A673 (cell line): ENCODE measurements at regions of chr1 and their contacts with region 1.

Region 1: DNA sequence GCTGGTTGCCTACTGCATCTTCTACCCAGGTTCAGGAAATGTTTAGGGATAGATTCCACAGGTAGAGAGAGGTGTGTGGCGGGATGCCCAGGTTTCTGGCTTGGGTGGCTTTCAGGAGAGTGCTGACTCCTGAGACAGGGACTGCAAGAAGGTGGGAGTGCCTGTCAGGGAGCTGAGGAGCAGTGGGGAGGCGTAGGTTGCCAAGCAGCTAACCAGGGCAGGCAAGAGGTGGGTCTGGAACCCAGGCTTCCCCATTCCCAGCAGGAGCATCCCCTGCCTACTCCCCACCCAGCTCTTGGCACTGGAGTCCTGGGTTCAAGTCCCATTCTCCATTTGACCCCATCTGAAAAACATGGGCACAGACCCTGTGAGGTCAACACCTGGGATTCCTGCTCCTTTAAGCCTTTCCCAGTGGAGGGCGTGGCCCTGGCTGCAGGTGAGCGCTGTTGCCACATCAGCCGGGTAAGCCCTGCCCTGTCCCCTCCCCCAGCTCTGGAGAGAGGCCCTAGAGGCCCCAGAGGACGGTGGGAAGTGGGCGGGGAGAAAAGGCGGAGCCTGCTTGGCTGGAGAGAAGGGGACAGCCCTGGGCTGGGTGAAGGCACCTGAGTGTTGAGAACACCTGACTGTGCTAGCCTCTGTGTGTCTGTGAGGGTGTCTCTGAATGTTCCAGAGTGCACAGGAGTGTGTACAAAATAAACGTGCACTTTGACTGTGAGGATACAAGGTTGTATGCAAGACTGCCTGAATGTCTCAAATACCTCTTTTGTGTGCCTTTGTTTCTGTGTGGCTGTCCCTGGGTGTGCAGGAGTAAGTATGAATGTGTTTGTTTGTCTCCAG is 14.0 kb upstream of the SYNC start:
- DNase-seq: peak; percentile 58
- H3K4me3 ChIP-seq: no peak overlapping the region
- H3K27ac ChIP-seq: no peak overlapping the region
- H3K4me1 ChIP-seq: peaks cover 6% of the 10 kb centered on the region
- H3K27me3 ChIP-seq: no peaks in the 10 kb centered on the region
- CTCF ChIP-seq: no peak

Region 2: DNA sequence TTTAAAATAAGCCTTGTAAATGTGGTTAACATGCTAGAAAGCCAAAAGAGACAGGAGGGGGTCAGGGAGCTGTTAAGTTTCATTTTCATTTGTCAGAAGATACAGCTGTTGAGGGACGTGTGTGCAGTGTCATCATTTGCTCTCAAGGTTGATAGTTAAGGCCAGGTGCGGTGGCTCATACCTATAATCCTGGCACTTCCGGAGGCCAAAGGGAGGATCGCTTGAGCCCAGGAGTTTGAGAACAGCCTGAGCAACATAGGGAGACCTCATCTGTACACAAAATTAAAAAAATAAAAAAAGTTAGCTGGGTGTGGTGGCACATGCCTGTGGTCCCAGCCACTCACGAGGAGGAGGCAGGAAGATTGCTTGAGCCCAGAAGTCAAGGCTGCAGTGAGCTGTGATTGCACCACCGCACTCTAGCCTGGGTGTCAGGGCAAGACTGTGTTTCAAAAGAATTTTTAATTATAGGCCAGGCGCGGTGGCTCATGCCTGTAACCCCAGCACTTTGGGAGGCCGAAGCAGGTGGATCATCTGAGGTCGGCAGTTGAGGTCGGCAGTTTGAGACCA is 88.9 kb before region 1 on chr1:
- CTCF ChIA-PET with region 1: no interaction called
- POLR2A ChIA-PET with region 1: no interaction called
- intact Hi-C with region 1: no loop called
- DNase-seq: no peak
- H3K4me3 ChIP-seq: no peak overlapping the region
- H3K27ac ChIP-seq: no peak overlapping the region
- H3K4me1 ChIP-seq: no peaks in the 10 kb centered on the region
- H3K27me3 ChIP-seq: no peaks in the 10 kb centered on the region
- CTCF ChIP-seq: no peak

Region 3: GRCh38 chr1:32773018-32773763 is 56.7 kb after region 1 on chr1:
- CTCF ChIA-PET with region 1: interaction called, 21 read pairs
- POLR2A ChIA-PET with region 1: no interaction called
- intact Hi-C with region 1: loop called (anchors 1 kb)
- DNase-seq: peak; percentile 78
- H3K4me3 ChIP-seq: no peak overlapping the region
- H3K27ac ChIP-seq: no peak overlapping the region
- H3K4me1 ChIP-seq: no peaks in the 10 kb centered on the region
- H3K27me3 ChIP-seq: no peaks in the 10 kb centered on the region
- CTCF ChIP-seq: peak; percentile 96

Region 4: DNA sequence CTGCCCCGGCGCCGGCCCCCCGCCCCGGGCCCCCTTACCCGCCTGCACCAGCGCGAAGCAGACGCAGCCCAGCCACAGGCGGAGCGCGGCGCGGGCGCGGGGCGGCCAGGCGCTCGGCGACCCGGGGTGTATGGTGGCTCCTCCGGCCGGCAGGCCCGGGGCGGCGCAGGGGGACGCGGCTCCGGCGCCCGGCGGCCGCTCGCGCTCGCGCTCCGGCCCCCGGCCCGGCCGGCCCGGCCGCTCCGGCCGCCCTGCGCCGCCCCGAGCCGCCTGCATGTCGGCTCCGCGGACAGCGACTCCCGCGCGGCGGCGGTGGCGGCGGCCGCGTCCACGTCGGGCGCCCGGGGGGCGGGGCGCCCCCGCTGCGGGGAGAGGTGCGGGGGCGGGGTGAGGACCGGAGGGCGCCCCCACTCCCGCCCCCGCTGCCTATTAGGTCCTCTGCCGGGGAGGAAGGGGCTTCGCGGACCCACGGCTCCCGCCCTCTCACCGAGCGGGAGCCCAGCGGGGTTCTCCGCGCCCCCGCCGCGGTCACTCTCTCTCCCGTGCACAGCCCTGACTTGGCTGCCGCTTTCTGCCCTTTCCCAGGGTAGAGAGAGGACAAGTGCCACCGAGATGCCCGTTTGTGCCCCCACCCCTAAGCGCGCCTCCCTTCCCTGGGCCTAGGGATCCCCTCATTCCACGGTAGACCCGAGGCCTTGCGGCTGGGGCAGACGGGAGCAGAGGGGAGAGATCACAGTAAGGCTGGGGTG is 154.3 kb after region 1 on chr1 and contains the start of gene FNDC5:
- CTCF ChIA-PET with region 1: interaction called, 5 read pairs
- POLR2A ChIA-PET with region 1: no interaction called
- intact Hi-C with region 1: loop called (anchors 5 kb)
- DNase-seq: peak; percentile 42
- H3K4me3 ChIP-seq: peak within 1 kb of the TSS; percentile 48
- H3K27ac ChIP-seq: no peak within 1 kb of the TSS
- H3K4me1 ChIP-seq: peaks cover 5% of the 10 kb centered on the region
- H3K27me3 ChIP-seq: no peaks in the 10 kb centered on the region
- CTCF ChIP-seq: no peak
- total RNA-seq, gene FNDC5: 1.2 and 1.3 TPM in 2 replicates